ENCODE measurements at regions of chr11 and their contacts with region 1.

Region 1: DNA sequence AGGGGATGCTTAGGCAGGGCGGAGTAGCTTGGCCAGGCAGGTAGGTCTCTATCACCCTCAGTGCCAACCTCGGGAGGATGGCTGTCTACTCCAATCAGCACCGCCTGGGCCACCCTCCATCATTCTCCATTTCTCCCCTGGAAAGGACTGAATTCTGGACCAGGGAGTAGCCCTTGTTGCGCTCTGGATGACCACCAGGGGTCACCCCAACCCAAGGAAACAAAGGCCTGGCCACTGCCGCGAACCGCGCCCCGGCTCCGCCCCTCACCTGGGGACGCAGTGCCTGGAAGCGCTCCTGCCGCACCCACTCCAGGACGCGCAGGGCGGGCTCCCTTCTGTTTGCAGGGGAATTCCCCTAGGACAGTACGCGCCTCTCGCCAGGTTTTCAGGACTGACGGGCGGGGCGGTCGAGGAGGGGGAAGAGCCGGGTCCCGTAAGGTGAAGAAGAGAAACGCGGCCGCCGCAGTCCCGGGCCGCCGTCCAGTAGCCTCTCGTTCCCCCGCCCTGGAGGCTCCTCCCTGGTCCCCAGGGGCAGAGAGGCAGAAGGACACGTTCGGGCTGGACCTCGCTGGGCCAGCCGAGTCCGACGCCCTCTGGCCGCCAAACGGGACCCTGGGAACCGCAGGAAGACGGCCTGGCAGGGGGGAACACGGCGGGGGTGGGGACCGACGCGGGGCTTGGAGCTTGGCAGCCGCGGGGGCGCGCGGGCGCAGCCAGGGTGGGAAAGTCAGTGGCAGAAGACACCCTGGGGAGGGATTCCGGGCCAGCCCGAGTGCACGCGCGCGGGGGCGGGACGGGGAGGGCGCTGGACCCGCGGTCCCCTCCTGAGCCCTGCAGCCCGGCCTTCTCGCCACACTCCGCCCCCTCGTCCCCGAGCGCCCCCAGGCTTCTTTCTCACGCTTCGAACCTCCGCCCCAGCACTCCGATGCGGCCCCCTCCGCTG is 7.1 kb downstream of the SCN4B start:
- DNase-seq: peak; percentile 82
- ATAC-seq: peak; percentile 94
- H3K4me3 ChIP-seq: peak overlapping the region; percentile 53 to 66
- H3K27ac ChIP-seq: peak overlapping the region; percentile 39; the same call in 1 of the 2 replicates
- H3K4me1 ChIP-seq: peaks cover 0 to 10% of the 10 kb centered on the region in 2 experiments; a peak in 2 of 4 replicates
- H3K27me3 ChIP-seq: no peaks in the 10 kb centered on the region
- CTCF ChIP-seq: peak; percentile 78 to 93 (median 86)
- POLR2A ChIP-seq: no peak
- RAD21 ChIP-seq: peak; percentile 99

Region 2: GRCh38 chr11:118171269-118172062 is 25.9 kb after region 1 on chr11:
- CTCF ChIA-PET with region 1: interaction called, 14 read pairs
- POLR2A ChIA-PET with region 1: no interaction called
- RAD21 ChIA-PET with region 1: interaction called in 1 of 2 experiments, 6 read pairs
- intact Hi-C with region 1: loop called (anchors 1 kb)
- DNase-seq: no peak
- ATAC-seq: peak; percentile 93
- H3K4me3 ChIP-seq: no peak overlapping the region
- H3K27ac ChIP-seq: no peak overlapping the region
- H3K4me1 ChIP-seq: peaks cover 0 to 7% of the 10 kb centered on the region in 2 experiments; a peak in 1 of 4 replicates
- H3K27me3 ChIP-seq: no peaks in the 10 kb centered on the region
- CTCF ChIP-seq: peak; percentile 81 to 93 (median 82)
- POLR2A ChIP-seq: no peak
- RAD21 ChIP-seq: peak; percentile 95

Region 3: GRCh38 chr11:118198370-118198769 is 52.8 kb after region 1 on chr11:
- CTCF ChIA-PET with region 1: no interaction called
- POLR2A ChIA-PET with region 1: no interaction called
- RAD21 ChIA-PET with region 1: no interaction called
- intact Hi-C with region 1: no loop called
- DNase-seq: peak; percentile 48
- ATAC-seq: peak; percentile 97
- H3K4me3 ChIP-seq: no peak overlapping the region
- H3K27ac ChIP-seq: no peak overlapping the region
- H3K4me1 ChIP-seq: peaks cover 0 to 17% of the 10 kb centered on the region in 2 experiments; a peak in 3 of 4 replicates
- H3K27me3 ChIP-seq: no peaks in the 10 kb centered on the region
- CTCF ChIP-seq: peak; percentile 88 to 94 (median 92)
- POLR2A ChIP-seq: no peak
- RAD21 ChIP-seq: peak; percentile 99

Region 4: DNA sequence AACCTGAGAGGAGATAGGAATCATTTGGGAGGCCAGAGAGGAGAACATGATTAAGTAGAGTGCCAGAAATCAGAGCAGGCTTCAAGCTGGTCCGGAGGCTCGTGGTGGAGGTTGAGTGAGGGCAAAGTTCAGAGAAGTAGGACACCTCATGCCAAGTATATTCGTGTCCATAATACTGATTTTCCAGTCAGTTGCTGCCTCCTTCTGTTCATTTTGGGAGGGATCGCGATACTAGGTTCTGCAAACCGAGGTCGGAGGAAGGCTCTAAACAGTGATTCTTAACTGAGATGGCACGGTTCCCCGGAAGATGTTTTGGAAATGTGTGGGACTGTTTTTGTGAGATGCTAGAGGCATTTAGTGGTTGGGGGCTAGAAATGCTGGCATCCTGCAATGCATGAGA is 145.4 kb after region 1 on chr11:
- CTCF ChIA-PET with region 1: no interaction called
- POLR2A ChIA-PET with region 1: no interaction called
- RAD21 ChIA-PET with region 1: no interaction called
- intact Hi-C with region 1: loop called (anchors 1 kb)
- DNase-seq: peak; percentile 51
- ATAC-seq: peak; percentile 88
- H3K4me3 ChIP-seq: peak overlapping the region; percentile 10 to 22; a peak in 3 of 4 replicates
- H3K27ac ChIP-seq: no peak overlapping the region
- H3K4me1 ChIP-seq: peaks cover 10 to 27% of the 10 kb centered on the region in 2 experiments; a peak in 3 of 4 replicates
- H3K27me3 ChIP-seq: no peaks in the 10 kb centered on the region
- CTCF ChIP-seq: peak; percentile 48 to 95 (median 59)
- POLR2A ChIP-seq: no peak
- RAD21 ChIP-seq: peak; percentile 99

Region 5: GRCh38 chr11:118353084-118353710 is 207.6 kb after region 1 on chr11:
- CTCF ChIA-PET with region 1: no interaction called
- POLR2A ChIA-PET with region 1: no interaction called
- RAD21 ChIA-PET with region 1: no interaction called
- intact Hi-C with region 1: loop called (anchors 1 kb)
- DNase-seq: no peak
- ATAC-seq: no peak; the same call in 1 of the 2 replicates
- H3K4me3 ChIP-seq: no peak overlapping the region
- H3K27ac ChIP-seq: no peak overlapping the region
- H3K4me1 ChIP-seq: no peaks in the 10 kb centered on the region
- H3K27me3 ChIP-seq: peaks cover 22% of the 10 kb centered on the region
- CTCF ChIP-seq: peak; percentile 45 to 76 (median 70); a peak in 5 of 6 replicates
- POLR2A ChIP-seq: no peak
- RAD21 ChIP-seq: peak; percentile 62

Region 6: GRCh38 chr11:118488480-118489109 is 343.0 kb after region 1 on chr11:
- CTCF ChIA-PET with region 1: no interaction called
- POLR2A ChIA-PET with region 1: no interaction called
- RAD21 ChIA-PET with region 1: no interaction called
- intact Hi-C with region 1: loop called (anchors 1 kb)
- DNase-seq: peak; percentile 59
- ATAC-seq: peak; percentile 81
- H3K4me3 ChIP-seq: no peak overlapping the region
- H3K27ac ChIP-seq: no peak overlapping the region
- H3K4me1 ChIP-seq: no peaks in the 10 kb centered on the region
- H3K27me3 ChIP-seq: no peaks in the 10 kb centered on the region
- CTCF ChIP-seq: peak; percentile 79 to 91 (median 83)
- POLR2A ChIP-seq: no peak
- RAD21 ChIP-seq: peak; percentile 91

Region 7: DNA sequence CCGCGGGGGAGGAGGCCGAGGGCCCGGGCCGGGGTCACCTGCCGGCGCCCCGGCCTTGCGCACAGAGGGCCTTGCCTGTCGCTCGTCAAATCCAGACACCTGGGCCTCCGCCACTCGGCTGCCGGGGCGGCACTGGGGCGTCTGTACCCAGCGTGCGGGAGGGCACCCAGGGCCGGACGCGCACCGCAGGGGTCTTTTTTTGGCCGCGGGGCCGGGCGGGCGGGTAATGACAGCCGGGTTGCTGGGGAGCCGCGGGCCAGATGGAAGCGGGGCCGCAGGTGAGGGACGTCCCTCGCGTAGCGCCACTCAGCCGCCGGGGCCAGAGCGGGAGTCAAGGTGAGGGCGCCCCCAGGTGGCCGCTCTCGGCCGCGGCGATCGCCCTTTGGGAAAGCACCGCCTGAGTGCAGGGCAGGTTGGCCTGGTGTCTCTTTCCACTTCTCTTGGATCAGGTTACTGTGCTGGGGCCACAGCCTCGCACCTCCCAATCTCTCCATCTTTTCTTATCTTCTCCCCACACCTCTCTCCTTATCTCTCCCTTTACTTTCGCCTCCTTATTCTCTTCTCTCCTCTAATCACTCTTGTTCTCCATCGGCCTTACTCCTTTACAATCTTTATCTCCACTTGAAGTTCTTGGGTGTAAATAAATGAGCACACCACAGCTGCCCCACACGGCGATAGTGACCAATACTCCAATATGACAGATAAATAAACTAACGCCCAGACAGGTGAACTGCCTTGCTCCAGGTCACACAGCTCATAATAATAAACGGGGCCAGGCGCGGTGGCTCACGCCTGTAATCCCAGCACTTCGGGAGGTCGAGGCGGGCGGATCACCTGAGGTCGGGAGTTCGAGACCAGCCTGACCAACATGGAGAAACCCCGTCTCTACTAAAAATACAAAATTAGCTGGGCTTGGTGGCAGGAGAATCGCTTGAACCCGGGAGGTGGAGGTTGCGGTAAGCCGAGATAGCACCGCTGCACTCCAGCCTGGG is 465.5 kb after region 1 on chr11:
- CTCF ChIA-PET with region 1: no interaction called
- POLR2A ChIA-PET with region 1: no interaction called
- RAD21 ChIA-PET with region 1: no interaction called
- intact Hi-C with region 1: loop called (anchors 5 kb)
- DNase-seq: no peak
- ATAC-seq: peak; percentile 71
- H3K4me3 ChIP-seq: no peak overlapping the region
- H3K27ac ChIP-seq: no peak overlapping the region
- H3K4me1 ChIP-seq: peaks cover 10 to 41% of the 10 kb centered on the region in 2 experiments
- H3K27me3 ChIP-seq: no peaks in the 10 kb centered on the region
- CTCF ChIP-seq: peak; percentile 69 to 92 (median 85)
- POLR2A ChIP-seq: no peak
- RAD21 ChIP-seq: peak; percentile 75